Cardiac septum (tissue), 1 donor: ENCODE measurements at regions of chr7 and their contacts with region 1.

Region 1: DNA sequence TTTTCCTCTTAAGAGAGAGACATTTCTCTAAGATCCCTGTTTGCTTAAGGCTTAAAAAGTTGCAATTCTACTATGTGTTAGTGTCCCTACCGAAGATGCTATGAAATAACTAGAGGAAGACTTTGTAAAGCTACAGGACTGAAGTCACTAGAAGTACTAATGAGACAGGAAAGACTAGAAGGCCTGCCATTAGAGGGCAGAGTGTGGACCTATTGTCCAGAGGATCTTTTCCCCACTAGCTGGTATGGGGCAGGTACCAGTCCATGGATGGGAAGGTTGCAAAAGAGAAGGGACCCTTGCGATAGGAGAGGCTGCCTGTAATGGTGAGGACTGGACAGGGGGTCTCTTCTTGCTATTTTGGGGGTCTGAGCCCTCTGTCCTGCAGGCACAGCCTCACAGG is 178.1 kb downstream of the TMEM178B start:
- DNase-seq: no peak

Region 2: DNA sequence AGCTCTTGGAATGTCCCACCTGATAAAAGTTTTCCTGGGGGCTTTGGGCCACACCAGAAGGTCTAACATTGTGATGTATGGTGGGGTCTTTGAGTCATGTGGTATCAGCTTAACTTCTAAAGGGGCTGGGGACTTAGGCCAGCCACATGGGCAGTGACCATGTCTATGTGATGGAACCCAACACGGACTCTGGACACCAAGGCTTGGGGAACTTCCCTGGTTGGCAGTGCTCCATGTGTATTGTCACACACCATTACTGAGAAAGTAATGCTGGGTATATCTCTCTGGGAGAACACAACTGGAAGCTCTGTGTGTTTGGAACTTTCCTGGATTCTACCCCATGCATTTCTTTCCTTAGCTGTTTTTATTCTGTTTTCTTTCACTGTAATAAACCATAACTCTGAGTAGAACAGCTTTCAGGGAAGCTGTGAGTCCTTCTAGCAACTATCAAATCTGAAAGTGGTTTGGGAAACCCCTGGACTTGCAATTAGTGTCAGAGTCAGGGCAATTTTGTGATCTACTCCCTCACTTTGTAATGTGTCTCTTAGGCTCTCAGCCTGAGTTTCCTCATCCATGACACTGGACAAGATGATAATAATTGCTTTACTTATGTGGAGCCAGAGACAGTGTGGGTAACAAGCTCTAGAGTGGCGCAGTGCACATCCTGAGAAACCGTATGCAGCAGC is 270.8 kb after region 1 on chr7:
- intact Hi-C with region 1: loop called (anchors 10 kb)
- DNase-seq: no peak